HEK293T (cell line): ENCODE measurements at regions of chr17 and their contacts with region 1.

Region 1: DNA sequence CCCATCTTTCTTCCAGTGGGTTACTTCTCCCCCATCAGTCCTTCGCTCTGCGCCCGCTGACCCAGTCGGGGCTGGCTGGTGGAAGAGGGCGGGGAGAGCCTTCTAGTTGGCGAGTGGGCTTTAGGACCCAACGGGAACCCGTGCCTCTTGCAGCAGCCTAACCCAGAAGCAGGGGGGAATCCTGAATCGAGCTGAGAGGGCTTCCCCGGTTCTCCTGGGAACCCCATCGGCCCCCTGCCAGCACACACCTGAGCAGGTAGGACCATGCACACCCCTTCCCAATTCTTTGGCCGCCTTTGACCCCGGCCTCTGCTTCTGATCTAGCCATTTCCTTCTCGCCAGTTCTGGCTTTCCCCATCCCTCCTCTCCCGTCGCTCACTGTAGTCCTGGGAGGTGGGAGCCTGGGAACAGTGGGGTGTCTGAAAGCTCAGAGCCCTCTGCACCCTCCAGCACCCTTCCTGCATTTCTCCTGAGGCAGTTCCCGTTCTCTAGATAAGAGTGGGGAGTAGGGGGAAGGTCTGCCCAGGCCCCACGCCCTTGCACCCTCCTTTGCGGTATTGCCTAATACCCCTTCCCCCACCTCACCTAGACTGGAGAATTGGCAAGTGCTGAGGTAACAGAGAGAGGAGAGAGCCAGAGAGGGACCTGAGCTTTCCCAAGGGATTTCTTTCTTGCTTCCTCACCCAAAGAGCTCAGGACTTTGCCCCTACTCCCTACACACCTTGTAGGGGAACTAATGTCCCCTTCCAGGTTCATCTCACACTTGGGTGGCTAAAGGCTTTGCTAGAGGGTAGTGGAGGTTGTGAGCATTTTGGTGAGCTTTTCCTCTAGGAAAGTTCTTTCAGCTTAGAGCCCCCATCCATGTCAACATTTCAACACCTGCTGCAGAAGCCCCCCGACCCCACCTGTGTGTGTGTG is at the start of gene RARA:
- DNase-seq: no peak

Region 2: DNA sequence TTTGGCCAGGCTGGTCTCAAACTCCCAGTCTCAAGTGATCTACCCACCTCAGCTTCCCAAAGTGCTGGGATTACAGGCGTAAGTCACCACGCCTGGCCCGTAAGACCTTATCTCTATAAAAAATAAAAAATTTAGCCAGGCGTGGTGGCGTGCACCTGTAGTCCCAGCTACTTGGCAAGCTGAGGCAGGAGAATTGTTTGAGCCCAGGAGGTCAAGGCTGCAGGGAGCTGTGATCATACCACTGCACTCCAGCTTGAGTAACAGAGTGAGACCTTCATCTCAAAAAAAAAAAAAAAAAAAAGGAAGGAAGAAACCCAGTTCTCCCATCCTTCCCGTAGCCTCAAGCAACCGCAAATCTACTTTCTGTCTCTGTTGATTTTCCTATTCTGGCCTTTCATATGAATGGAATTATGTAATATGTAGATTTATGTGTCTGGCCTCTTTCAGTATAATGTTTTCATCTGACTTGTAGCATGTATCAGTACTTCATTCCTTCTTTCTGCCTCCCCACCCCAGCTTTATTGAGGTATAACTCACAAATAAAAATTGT is 157.8 kb before region 1 on chr17:
- CTCF ChIA-PET with region 1: no interaction called
- POLR2A ChIA-PET with region 1: no interaction called
- DNase-seq: no peak

Region 3: GRCh38 chr17:40345161-40345993 is 36.1 kb after region 1 on chr17:
- CTCF ChIA-PET with region 1: no interaction called
- POLR2A ChIA-PET with region 1: interaction called, 10 read pairs
- DNase-seq: no peak

Region 4: GRCh38 chr17:40355123-40355803 is 46.0 kb after region 1 on chr17:
- CTCF ChIA-PET with region 1: interaction called, 31 read pairs
- POLR2A ChIA-PET with region 1: interaction called, 8 read pairs
- DNase-seq: peak; percentile 72